Transverse colon (tissue), 4 donors: ENCODE measurements at regions of chr19 and their contacts with region 1.

Region 1: DNA sequence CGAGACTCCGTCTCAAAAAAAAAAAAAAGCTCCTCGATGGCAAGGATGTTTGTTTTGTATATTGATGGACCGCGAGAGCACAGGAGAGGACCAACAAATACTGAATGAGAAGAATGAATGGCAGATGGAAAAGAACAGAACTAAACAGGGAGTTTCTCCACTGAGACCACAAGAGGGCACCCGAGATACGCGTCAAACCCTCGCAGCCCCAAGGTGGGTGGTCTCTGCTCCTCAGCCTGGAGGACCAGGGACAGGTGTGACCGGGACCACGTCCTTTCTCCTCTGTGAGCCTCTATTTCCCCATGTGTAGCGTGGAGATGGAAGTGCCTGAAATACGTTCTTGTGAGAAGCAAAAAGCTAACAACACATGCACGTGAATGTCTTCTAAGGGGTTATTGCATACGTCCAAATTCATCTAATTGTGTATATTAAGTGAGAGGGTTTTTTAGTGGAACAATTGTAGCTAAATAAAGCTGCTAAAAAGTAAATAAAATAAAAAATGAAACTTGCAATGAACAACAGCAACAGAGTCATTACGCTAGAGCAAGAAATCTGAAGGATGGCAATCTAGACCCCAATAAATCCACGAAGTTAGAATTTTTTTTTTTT is 8.3 kb upstream of the CDC42EP5 start:
- DNase-seq: no peak
- H3K4me3 ChIP-seq: no peak overlapping the region
- H3K27ac ChIP-seq: no peak overlapping the region
- H3K4me1 ChIP-seq: peaks cover 0 to 20% (median 2%) of the 10 kb centered on the region in 4 donors
- H3K27me3 ChIP-seq: peaks cover 33% of the 10 kb centered on the region
- CTCF ChIP-seq: peak; percentile 37 to 73 (median 53)
- EP300 ChIP-seq: no peak
- POLR2A ChIP-seq: no peak

Region 2: DNA sequence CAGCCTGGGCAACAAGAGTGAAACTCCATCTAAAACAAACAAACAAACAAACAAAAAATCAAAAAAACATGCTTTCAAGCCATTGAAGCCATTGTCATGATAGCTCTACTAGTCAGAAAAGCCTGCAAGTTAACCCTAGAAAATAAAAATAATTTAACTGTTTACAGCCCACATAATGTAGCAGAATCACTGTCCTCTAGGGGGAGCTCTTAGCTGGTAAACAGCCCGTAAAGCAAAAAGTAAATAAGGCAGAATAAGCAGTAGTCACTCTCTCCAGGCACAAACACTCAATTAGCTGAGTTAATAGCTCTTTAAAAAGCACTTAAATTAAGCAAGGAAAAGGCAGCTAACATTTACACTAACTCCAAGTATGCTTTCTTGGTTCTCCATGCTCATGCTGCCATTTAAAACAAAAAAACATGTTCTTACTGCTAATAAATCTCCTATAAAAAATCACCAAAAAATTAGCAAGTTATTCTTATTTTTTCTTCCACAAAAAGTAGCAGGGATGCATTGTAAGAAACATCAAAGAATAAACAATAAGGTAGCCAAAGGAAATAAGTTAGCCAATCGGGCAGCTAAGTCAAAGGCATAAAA is 192.7 kb after region 1 on chr19:
- in situ Hi-C with region 1: loop called in 2 of 4 experiments (anchors 10 kb)
- intact Hi-C with region 1: no loop called
- DNase-seq: no peak
- H3K4me3 ChIP-seq: no peak overlapping the region
- H3K27ac ChIP-seq: no peak overlapping the region
- H3K4me1 ChIP-seq: no peaks in the 10 kb centered on the region
- H3K27me3 ChIP-seq: peaks cover 7% of the 10 kb centered on the region
- CTCF ChIP-seq: peak in 4 of 5 experiments; percentile 24 to 49 (median 42)
- EP300 ChIP-seq: no peak
- POLR2A ChIP-seq: no peak